Activated CD8-positive, alpha-beta memory T cell treated with anti-CD3 and anti-CD28 coated beads, Interleukin-2, amount 10 ng/mL, durations not matched to agents 7 days and 5 days (primary cell): ENCODE measurements at regions of chr5 and their contacts with region 1.

Region 1: GRCh38 chr5:176660860-176661641 is 13.8 kb downstream of the TSPAN17 start:
- DNase-seq: peak; percentile 82
- ATAC-seq: peak; percentile 77
- H3K4me3 Mint-ChIP-seq: no peak overlapping the region
- H3K27ac Mint-ChIP-seq: no peak overlapping the region
- H3K4me1 Mint-ChIP-seq: peaks cover 29% of the 10 kb centered on the region
- H3K27me3 Mint-ChIP-seq: peaks cover 13% of the 10 kb centered on the region

Region 2: GRCh38 chr5:176365610-176366404 is 295.2 kb before region 1 on chr5:
- CTCF ChIA-PET with region 1: no interaction called
- DNase-seq: peak; percentile 49
- ATAC-seq: peak; percentile 5
- H3K4me3 Mint-ChIP-seq: peak overlapping the region; percentile 68
- H3K27ac Mint-ChIP-seq: no peak overlapping the region
- H3K4me1 Mint-ChIP-seq: peaks cover 32% of the 10 kb centered on the region
- H3K27me3 Mint-ChIP-seq: no peaks in the 10 kb centered on the region

Region 3: DNA sequence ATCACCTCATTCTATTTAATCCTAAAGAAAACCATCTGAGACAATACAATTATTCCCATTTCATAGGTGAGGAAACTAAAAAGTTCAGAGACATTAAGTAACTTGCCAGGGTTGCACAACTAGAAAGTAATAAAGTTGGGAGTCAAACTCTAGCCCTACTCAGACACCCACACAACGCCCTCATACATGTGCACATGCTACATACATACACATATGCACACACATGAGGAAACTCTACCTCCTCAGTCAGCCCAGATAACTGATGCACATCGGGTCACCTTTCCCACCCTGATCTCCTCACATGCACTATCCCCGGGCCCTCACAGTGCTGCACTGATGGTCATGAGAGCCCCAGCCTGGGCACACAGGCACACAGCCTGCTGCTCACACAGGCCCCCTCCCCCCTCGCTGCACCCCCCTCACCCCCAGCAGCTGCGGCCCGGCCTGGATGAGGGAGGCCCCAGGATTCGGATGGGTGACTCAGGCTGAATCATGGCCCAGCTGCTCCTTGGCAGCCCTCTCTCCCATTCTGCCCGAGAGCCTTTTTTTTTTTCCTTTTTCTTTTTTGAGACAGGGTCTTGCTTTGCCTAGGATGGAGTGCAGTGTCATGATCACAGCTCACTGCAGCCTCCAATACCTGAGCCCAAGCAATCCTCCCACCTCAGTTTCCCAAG is 46.1 kb before region 1 on chr5:
- CTCF ChIA-PET with region 1: no interaction called
- DNase-seq: no peak
- ATAC-seq: no peak
- H3K4me3 Mint-ChIP-seq: no peak overlapping the region
- H3K27ac Mint-ChIP-seq: no peak overlapping the region
- H3K4me1 Mint-ChIP-seq: peaks cover 13% of the 10 kb centered on the region
- H3K27me3 Mint-ChIP-seq: peaks cover 76% of the 10 kb centered on the region

Region 4: DNA sequence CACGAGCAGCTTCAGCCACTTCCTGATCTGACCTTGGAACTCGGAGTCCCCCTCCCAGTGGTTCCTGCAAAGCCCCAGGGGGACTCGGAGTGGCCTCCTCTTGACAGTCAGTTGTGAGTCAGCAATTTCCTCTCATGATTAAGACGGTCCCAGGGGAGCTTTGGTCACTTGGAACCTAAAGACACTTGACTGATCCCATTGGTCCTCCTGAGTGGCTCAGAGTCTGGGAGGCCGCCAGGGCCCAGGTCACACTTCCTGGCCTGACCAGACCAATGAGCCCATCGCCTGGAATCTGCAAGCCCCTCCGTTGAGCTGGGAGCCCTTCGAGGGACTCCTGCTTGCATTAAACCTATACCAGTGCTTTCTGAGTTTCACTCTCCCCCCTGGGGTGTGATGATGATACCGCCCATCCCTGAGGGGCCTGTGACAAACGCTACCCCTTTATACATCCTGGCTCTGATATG is 15.3 kb after region 1 on chr5:
- CTCF ChIA-PET with region 1: interaction called, 11 read pairs
- DNase-seq: no peak
- ATAC-seq: no peak
- H3K4me3 Mint-ChIP-seq: no peak overlapping the region
- H3K27ac Mint-ChIP-seq: no peak overlapping the region
- H3K4me1 Mint-ChIP-seq: no peaks in the 10 kb centered on the region
- H3K27me3 Mint-ChIP-seq: peaks cover 34% of the 10 kb centered on the region

Region 5: DNA sequence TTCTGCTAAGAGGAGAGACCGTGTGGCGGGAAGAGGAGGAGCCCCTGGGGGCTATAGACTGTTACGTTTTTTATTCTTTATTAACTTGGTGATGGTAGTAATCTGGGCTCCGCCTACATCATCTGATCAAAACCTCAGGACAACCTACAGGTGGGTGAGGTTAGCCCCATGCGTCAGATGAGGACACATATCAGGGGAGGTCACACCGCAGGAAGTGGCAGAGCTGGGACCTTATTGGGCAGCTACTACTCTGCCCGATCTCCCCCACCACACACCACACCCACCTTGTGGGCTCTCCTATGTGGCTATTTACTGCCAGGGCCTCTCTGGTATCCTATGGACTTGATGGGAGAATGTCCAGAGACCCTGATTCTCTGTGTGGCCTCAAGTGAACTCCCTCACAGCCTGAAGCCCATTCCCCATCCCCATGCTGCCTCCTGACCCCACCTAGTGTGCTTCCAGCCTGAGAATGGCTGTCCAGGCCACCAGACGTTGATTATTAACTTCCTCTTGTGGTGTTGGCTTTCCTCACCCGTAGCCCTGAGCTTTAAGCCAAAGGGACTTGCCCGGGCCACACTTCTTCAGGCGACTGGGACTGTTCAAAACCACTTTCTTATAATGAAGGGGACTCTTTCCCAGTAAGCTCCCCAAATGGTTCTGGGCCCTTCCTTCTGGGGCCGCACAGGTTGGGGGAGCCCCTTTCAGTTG is 157.5 kb after region 1 on chr5:
- CTCF ChIA-PET with region 1: interaction called, 10 read pairs
- DNase-seq: peak; percentile 86
- ATAC-seq: peak; percentile 82
- H3K4me3 Mint-ChIP-seq: peak overlapping the region; percentile 35
- H3K27ac Mint-ChIP-seq: peak overlapping the region; percentile 22
- H3K4me1 Mint-ChIP-seq: peaks cover 16% of the 10 kb centered on the region
- H3K27me3 Mint-ChIP-seq: peaks cover 69% of the 10 kb centered on the region

Region 6: GRCh38 chr5:176965633-176966032 is 304.6 kb after region 1 on chr5:
- CTCF ChIA-PET with region 1: interaction called, 18 read pairs
- DNase-seq: no peak
- ATAC-seq: no peak
- H3K4me3 Mint-ChIP-seq: no peak overlapping the region
- H3K27ac Mint-ChIP-seq: no peak overlapping the region
- H3K4me1 Mint-ChIP-seq: peaks cover 2% of the 10 kb centered on the region
- H3K27me3 Mint-ChIP-seq: no peaks in the 10 kb centered on the region

Region 7: GRCh38 chr5:177086924-177087706 is 426.1 kb after region 1 on chr5:
- CTCF ChIA-PET with region 1: interaction called, 11 read pairs
- DNase-seq: peak; percentile 65
- ATAC-seq: peak; percentile 85
- H3K4me3 Mint-ChIP-seq: no peak overlapping the region
- H3K27ac Mint-ChIP-seq: no peak overlapping the region
- H3K4me1 Mint-ChIP-seq: peaks cover 9% of the 10 kb centered on the region
- H3K27me3 Mint-ChIP-seq: peaks cover 45% of the 10 kb centered on the region